IMR-90 (cell line): ENCODE measurements at regions of chr9 and their contacts with region 1.

Region 1: GRCh38 chr9:80320916-80321315 is 749.2 kb downstream of the TLE4 start:
- DNase-seq: peak; percentile 33
- ATAC-seq: no peak
- H3K4me3 ChIP-seq: no peak overlapping the region
- H3K27ac ChIP-seq: no peak overlapping the region
- H3K4me1 ChIP-seq: no peaks in the 10 kb centered on the region
- H3K27me3 ChIP-seq: no peaks in the 10 kb centered on the region
- CTCF ChIP-seq: no peak
- POLR2A ChIP-seq: no peak
- RAD21 ChIP-seq: no peak

Region 2: GRCh38 chr9:80391886-80392285 is 71.0 kb after region 1 on chr9:
- CTCF ChIA-PET with region 1: no interaction called
- POLR2A ChIA-PET with region 1: no interaction called
- dilution Hi-C with region 1: no loop called
- in situ Hi-C with region 1: no loop called
- intact Hi-C with region 1: loop called (anchors 10 kb)
- DNase-seq: no peak
- ATAC-seq: no peak
- H3K4me3 ChIP-seq: no peak overlapping the region
- H3K27ac ChIP-seq: no peak overlapping the region
- H3K4me1 ChIP-seq: no peaks in the 10 kb centered on the region
- H3K27me3 ChIP-seq: no peaks in the 10 kb centered on the region
- CTCF ChIP-seq: no peak
- POLR2A ChIP-seq: no peak
- RAD21 ChIP-seq: no peak